Activated T-helper 1 cell treated with anti-CD3 and anti-CD28 coated beads, Interleukin-12 subunit alpha, Interleukin-12 subunit beta, Interleukin-2, Interleukin-4 antibody, amounts not matched to agents 30 ng/mL and 10 ng/mL and 1 ng/mL, durations not matched to agents 14 hours and 24 hours and 36 hours (primary cell): ENCODE measurements at regions of chr3 and their contacts with region 1.

Region 1: DNA sequence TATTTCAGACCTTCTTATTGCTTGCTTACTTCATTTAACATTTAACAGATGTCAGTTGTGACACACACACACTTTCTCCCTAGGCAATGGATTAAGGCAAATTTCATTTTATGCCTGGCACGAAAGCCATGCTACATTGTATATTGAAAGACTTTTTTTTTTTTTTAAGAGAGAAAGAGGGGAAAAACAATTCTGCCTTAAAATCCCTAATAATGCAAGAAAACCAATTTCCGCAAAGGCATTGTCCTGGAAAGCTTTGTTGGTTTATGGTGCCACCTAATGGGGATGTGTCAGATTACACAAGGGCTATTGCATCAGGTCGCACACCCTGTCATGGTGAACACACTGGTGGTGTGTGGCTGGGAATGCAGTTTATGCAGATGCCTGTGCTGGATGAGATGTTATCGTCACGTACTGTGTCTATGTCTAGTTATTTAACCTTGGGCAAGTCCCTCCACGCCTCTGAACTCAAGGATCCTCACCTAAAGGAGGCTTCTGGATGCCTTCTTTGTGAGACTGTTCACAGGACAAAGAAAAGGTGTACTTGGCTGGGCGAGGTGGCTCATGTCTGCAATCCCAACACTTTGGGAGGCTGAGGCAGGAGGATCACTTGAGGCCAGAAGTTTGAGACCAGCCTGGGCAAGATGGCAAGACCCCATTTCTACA is 37.3 kb upstream of the RFTN1 start:
- DNase-seq: peak; percentile 67
- H3K4me3 Mint-ChIP-seq: no peak overlapping the region
- H3K27ac Mint-ChIP-seq: peak overlapping the region; percentile 71
- H3K4me1 Mint-ChIP-seq: peaks cover 27% of the 10 kb centered on the region
- H3K27me3 Mint-ChIP-seq: peaks cover 6% of the 10 kb centered on the region

Region 2: DNA sequence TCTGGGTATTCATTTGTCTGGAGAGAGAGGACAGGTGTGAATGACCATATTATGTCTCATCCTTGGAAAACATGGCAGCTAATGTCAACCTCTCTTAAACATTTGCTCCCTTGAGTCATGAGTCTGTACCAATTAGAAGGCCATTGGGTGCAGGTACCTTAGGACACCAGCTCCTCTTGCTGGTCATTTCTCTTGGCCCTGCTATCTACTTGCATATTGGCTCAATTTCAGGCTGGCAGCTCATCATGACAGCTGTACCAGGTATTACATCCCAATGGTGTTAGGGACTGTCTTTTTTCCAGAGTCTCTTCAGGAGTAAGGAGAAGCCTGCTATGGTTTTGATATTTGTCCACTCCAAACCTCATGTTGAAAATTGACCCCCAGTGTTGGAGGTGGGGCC is 660.9 kb before region 1 on chr3:
- intact Hi-C with region 1: no loop called
- DNase-seq: no peak
- H3K4me3 Mint-ChIP-seq: no peak overlapping the region
- H3K27ac Mint-ChIP-seq: no peak overlapping the region
- H3K4me1 Mint-ChIP-seq: no peaks in the 10 kb centered on the region
- H3K27me3 Mint-ChIP-seq: no peaks in the 10 kb centered on the region

Region 3: GRCh38 chr3:16319307-16319706 is 231.5 kb before region 1 on chr3:
- intact Hi-C with region 1: loop called (anchors 1 kb)
- DNase-seq: peak; percentile 74
- H3K4me3 Mint-ChIP-seq: peak overlapping the region; percentile 6
- H3K27ac Mint-ChIP-seq: peak overlapping the region; percentile 89
- H3K4me1 Mint-ChIP-seq: peaks cover 71% of the 10 kb centered on the region
- H3K27me3 Mint-ChIP-seq: no peaks in the 10 kb centered on the region

Region 4: GRCh38 chr3:16338999-16339398 is 211.8 kb before region 1 on chr3:
- intact Hi-C with region 1: loop called (anchors 2 kb)
- DNase-seq: peak; percentile 12
- H3K4me3 Mint-ChIP-seq: peak overlapping the region; percentile 5
- H3K27ac Mint-ChIP-seq: peak overlapping the region; percentile 81
- H3K4me1 Mint-ChIP-seq: peaks cover 54% of the 10 kb centered on the region
- H3K27me3 Mint-ChIP-seq: no peaks in the 10 kb centered on the region

Region 5: DNA sequence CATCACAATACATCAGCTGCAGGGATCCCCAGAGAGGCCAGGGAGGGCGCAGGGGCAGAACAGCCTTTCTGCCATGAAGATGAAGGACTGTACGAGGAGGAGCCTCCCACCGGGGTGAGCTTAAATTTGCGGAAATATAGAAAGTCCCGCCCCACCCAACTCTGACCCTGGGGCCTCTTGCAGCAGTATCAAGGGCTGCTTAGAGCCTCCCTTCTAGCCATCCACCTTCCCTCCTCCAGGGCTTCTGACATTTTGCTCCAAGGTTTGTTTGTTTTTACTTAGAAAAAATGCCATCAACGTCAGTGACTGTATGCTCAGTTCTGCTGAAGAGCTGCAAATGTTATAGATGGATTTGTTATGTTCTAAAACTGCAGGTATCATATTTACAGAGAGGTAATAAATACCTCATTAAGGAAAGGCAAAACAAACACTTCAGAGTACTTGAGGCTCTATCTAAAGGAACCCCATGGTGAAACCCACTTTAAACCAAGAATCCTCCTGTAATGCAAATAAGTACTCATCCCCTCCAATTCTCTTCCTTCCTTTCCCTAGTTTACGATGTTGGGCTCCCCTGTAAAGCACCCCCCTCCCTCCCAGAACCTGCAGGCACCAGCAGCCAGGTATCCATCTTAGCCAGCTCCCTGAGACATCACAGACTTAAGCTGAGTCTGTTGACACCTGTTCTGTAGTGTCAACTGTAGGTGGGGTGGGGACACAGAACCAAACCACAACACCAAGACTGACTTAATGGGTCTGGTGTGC is 67.9 kb before region 1 on chr3:
- intact Hi-C with region 1: loop called (anchors 2 kb)
- DNase-seq: peak; percentile 26
- H3K4me3 Mint-ChIP-seq: peak overlapping the region; percentile 75
- H3K27ac Mint-ChIP-seq: peak overlapping the region; percentile 75
- H3K4me1 Mint-ChIP-seq: peaks cover 84% of the 10 kb centered on the region
- H3K27me3 Mint-ChIP-seq: no peaks in the 10 kb centered on the region

Region 6: GRCh38 chr3:16504692-16505091 is 46.1 kb before region 1 on chr3:
- intact Hi-C with region 1: no loop called
- DNase-seq: no peak
- H3K4me3 Mint-ChIP-seq: no peak overlapping the region
- H3K27ac Mint-ChIP-seq: no peak overlapping the region
- H3K4me1 Mint-ChIP-seq: peaks cover 82% of the 10 kb centered on the region
- H3K27me3 Mint-ChIP-seq: no peaks in the 10 kb centered on the region